Activated CD4-positive, alpha-beta T cell treated with anti-CD3 and anti-CD28 coated beads, Interleukin-2, amount 10 ng/mL, durations not matched to agents 24 days and 14 days (primary cell): ENCODE measurements at regions of chr11 and their contacts with region 1.

Region 1: DNA sequence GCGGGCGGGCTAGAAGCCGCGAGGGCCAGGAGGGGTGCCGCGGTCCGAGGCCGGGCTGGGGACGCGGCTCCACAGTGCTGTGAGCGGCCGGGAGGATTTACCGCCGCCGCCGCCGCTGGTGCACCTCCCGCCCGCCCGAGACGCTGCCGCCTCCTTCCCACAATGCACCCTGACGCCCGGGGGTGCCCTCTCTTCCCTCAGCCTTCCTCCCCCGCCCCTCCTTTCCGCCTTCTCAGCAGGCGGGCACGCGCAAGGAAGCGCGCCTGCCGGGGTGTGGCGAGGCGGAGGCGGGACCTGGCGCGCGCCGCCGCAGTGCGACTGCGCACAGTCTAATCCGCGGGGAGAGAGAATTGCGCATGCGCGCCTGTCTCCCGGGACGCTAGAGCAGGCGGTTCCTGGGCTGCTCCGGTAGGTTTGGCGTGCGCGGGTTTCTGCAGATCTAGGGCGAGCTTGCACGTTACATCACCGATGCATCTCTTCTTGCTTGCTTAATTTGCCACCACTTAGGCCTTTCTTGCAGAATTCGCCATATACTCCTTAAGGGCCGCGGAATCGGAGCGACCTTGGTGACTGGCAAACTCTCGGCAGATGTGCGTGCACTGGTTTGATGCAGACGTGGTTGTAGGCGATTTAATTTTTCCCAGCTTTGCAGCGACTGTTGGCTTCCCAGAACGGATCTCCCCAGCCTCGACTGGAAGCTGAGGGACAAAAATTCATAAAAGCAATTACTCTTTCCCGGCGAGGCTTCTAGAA is at the starts of genes GVQW3 and THAP12:
- DNase-seq: peak; percentile 99
- H3K4me3 Mint-ChIP-seq: peak within 1 kb of the TSS; percentile 95
- H3K27ac Mint-ChIP-seq: peak within 1 kb of the TSS; percentile 91
- H3K4me1 Mint-ChIP-seq: peaks cover 40% of the 10 kb centered on the region
- H3K27me3 Mint-ChIP-seq: no peaks in the 10 kb centered on the region
- total RNA-seq, gene GVQW3: 3.7 and 4.3 TPM in 2 replicates
- total RNA-seq, gene THAP12: 77.8 and 80.9 TPM in 2 replicates

Region 2: DNA sequence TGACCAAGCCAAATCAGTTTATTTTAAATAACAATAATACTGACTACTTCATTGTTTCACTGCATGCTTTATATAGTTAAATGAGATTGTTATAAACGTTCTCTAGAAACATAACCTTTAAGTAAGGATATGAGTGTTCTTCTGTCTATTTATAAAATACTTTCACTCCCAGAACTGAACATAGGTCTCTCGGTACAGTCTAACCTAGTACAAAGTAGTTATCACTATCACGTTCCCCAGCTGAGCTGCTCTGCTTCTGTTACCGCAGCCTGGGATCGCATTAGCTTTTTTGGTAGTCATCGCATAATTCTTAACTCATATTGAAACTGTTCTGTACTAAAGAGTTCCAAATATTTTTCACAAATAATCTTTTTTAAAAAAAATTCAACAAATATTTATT is 318.4 kb before region 1 on chr11:
- intact Hi-C with region 1: no loop called
- DNase-seq: no peak
- H3K4me3 Mint-ChIP-seq: no peak overlapping the region
- H3K27ac Mint-ChIP-seq: no peak overlapping the region
- H3K4me1 Mint-ChIP-seq: no peaks in the 10 kb centered on the region
- H3K27me3 Mint-ChIP-seq: no peaks in the 10 kb centered on the region

Region 3: DNA sequence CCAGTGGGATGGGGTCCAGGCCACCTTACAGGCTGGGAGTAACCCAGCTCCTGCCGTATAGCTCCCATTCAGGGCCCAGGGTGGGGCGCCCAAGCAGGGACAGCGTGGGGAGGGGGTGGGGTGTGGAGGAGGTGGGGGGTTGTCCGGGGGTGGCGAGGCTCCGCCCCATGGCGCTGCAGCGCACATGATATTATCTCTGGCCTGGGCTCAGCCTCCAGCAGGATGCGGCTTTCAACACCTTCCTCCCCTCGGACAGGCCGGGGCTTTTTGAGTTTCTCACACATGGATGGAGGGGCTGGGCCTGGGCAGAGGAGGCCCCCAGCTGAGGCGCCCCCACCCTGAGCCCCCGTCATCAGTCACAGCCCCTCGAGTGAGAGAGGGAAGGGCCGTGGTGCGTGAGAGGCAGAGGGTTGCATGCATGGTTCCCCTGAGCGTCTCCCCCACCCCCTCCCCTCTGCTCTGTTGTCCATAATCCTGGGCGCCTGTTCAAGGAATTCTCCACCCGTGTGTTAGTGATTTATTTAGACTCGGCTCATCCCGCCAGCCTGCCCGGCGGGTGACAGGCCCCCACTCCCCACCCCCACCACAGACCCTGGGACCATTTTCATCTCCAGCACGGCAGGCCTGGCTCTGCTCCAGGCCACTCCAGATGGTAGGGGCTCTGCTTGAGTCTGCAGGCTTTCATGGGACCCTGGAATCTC is 219.7 kb before region 1 on chr11:
- intact Hi-C with region 1: no loop called
- DNase-seq: no peak
- H3K4me3 Mint-ChIP-seq: no peak overlapping the region
- H3K27ac Mint-ChIP-seq: no peak overlapping the region
- H3K4me1 Mint-ChIP-seq: no peaks in the 10 kb centered on the region
- H3K27me3 Mint-ChIP-seq: peaks cover 2% of the 10 kb centered on the region

Region 4: DNA sequence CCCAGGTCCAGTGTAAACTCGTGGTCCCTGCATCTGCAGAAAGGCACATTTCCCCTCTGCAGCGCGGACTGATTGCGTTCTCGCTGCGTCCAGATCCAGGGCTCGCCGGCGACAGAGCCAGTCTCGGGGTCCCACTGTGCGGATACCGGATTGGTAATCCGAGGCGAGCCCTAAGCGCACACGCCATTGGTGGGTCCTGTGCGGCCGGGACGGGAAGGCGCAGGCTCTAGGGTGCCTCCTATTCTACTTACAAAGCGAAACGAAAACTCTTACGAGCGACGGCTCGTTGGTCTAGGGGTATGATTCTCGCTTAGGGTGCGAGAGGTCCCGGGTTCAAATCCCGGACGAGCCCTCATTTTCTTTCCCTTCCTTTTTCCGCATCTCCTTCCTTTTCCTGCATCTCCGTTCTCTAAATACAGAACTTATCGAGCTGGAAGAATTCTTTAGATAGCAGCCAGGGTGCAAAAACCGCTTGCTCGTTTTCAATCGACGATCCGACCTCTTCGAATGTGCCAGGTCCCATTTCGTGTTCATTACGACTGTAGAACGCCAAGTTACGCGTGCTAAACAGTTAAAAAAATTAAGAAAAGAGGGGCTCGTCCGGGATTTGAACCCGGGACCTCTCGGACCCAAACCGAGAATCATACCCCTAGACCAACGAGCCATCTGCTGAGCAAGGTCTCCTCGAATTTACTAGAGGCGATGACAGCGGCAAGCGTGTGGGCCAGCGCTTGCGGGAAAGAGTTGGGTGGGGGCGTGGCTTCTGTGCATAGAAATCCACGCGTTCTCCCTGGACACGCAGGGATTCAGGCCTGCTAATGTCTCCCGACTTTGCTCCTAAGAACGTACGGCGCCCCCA is 145.7 kb before region 1 on chr11:
- intact Hi-C with region 1: loop called (anchors 1 kb)
- DNase-seq: peak; percentile 98
- H3K4me3 Mint-ChIP-seq: peak overlapping the region; percentile 96
- H3K27ac Mint-ChIP-seq: peak overlapping the region; percentile 96
- H3K4me1 Mint-ChIP-seq: peaks cover 48% of the 10 kb centered on the region
- H3K27me3 Mint-ChIP-seq: peaks cover 13% of the 10 kb centered on the region

Region 5: GRCh38 chr11:76288166-76288980 is 92.8 kb before region 1 on chr11:
- intact Hi-C with region 1: no loop called
- DNase-seq: peak; percentile 78
- H3K4me3 Mint-ChIP-seq: peak overlapping the region; percentile 43
- H3K27ac Mint-ChIP-seq: peak overlapping the region; percentile 82
- H3K4me1 Mint-ChIP-seq: peaks cover 20% of the 10 kb centered on the region
- H3K27me3 Mint-ChIP-seq: no peaks in the 10 kb centered on the region

Region 6: DNA sequence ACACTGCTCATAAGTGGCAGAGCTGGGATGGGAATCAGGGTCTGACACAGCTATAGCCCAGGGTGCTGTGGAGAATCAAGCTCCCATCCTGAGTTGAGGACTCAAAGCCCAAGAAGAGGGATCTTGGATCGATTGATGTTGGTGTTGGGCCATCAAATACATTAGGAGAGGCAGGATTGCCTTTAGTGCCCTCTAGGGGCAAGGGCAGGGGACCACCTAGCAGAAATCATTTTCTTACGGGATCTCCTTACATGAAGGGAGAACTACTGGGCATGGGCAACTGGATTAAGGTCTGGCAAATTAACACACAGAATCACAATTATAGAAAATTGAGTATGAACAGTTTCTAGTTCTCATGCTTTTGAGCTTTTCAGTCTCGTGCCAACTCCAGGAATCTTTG is 38.8 kb after region 1 on chr11:
- intact Hi-C with region 1: no loop called
- DNase-seq: peak; percentile 60
- H3K4me3 Mint-ChIP-seq: no peak overlapping the region
- H3K27ac Mint-ChIP-seq: no peak overlapping the region
- H3K4me1 Mint-ChIP-seq: peaks cover 7% of the 10 kb centered on the region
- H3K27me3 Mint-ChIP-seq: peaks cover 9% of the 10 kb centered on the region

Region 7: GRCh38 chr11:76680518-76681425 is 299.6 kb after region 1 on chr11:
- intact Hi-C with region 1: loop called (anchors 5 kb)
- DNase-seq: peak; percentile 91
- H3K4me3 Mint-ChIP-seq: no peak overlapping the region
- H3K27ac Mint-ChIP-seq: no peak overlapping the region
- H3K4me1 Mint-ChIP-seq: peaks cover 22% of the 10 kb centered on the region
- H3K27me3 Mint-ChIP-seq: peaks cover 5% of the 10 kb centered on the region